Activated naive CD8-positive, alpha-beta T cell treated with anti-CD3 and anti-CD28 coated beads, Interleukin-2, amount 10 ng/mL, durations not matched to agents 7 days and 5 days (primary cell): ENCODE measurements at regions of chr21 and their contacts with region 1.

Region 1: DNA sequence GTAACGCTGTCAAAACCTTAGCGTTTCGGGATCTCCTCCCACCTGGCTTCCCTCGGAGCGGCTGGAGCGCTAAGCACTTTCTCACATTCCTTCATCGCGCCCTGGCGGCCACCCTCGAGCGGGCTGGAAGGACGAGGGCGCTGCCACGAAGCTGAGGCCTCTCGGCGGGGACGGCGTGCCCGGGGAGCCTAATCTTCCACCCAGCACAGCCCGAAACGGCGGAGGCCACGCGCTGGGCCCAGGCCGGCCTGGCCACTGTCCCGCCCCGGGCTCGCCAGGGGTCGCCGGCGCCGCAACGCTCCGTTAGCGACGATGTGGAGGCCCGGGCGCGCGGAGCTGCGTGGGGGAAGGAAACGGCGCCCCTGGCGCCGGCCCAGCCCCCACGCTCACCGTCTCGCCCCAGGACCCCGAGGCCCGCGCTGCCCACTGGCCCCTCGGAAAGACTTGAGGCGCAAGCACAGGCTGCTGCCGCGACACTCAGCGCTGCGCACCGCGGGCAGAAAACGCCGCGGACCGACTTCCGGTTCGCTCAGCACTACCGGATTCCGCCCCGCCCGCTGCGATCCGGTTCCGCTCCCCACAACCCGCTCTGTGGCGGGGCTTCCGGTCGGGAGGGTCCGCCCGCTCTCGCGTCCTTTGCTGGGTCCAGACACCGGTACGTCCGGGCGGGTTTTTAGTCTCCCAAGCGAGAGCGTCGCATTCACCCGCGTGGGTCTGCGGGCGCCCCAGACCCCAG is at the start of gene YBEY:
- DNase-seq: peak; percentile 93
- ATAC-seq: peak; percentile 84
- H3K4me3 Mint-ChIP-seq: peak within 1 kb of the TSS; percentile 98
- H3K27ac Mint-ChIP-seq: peak within 1 kb of the TSS; percentile 97
- H3K4me1 Mint-ChIP-seq: peaks cover 36% of the 10 kb centered on the region
- H3K27me3 Mint-ChIP-seq: no peaks in the 10 kb centered on the region
- total RNA-seq, gene YBEY: 9.6 to 10.7 TPM

Region 2: GRCh38 chr21:46065215-46065913 is 220.6 kb before region 1 on chr21:
- POLR2A ChIA-PET with region 1: no interaction called
- DNase-seq: no peak
- ATAC-seq: peak; percentile 81
- H3K4me3 Mint-ChIP-seq: peak overlapping the region; percentile 74
- H3K27ac Mint-ChIP-seq: peak overlapping the region; percentile 87
- H3K4me1 Mint-ChIP-seq: peaks cover 9% of the 10 kb centered on the region
- H3K27me3 Mint-ChIP-seq: no peaks in the 10 kb centered on the region

Region 3: DNA sequence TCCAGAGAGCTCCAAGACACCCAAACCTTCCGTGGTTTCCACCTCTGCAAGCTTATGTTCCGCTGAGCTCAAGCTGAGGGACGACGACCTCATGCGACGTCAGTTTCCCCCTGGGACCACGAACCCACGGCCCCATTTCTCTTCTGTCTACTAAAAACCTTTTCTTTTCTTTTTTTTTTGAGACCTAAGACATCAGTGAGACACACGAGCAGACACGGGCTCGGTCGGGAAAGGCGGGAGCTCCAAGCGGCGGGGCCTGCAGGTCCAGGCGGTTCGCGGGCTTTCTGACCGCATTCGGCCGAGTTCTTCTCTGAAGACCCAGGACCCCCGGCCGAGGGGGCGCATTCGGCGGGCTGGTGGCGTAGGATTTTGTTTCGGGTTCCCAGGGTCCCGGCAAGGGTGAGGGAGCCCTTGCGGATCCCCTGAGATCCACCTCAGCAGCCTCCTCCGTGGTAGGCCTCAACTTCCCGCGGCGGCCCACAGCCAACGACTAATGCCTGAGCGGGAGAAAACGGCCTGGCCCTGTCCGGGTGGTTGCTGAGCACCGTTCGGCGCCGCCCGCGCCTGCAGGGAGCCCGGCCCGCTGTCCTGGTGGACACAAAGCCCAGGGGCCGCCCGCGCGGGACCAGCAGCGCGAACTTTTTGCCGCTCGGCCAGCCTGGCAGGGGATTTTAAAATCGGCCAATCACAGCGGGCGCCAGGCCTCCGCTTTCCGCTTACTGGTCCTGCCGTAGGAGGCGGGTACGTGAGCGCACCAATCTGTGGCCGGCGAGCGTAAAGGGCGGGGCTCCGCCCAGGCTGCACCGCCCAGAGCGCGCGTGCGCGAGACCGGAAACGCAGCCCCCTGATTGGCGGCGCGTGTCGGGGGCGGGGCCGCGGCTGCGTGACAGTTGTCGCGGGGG is 37.5 kb after region 1 on chr21 and contains the start of gene C21orf58:
- POLR2A ChIA-PET with region 1: interaction called, 14 read pairs
- DNase-seq: peak; percentile 100
- ATAC-seq: peak; percentile 87
- H3K4me3 Mint-ChIP-seq: peak within 1 kb of the TSS; percentile 98
- H3K27ac Mint-ChIP-seq: peak within 1 kb of the TSS; percentile 99
- H3K4me1 Mint-ChIP-seq: peaks cover 32% of the 10 kb centered on the region
- H3K27me3 Mint-ChIP-seq: no peaks in the 10 kb centered on the region
- total RNA-seq, gene C21orf58: 50.1 to 53.9 TPM